Naive thymus-derived CD4-positive, alpha-beta T cell (primary cell): ENCODE measurements at regions of chr15 and their contacts with region 1.

Region 1: GRCh38 chr15:52331490-52332240 is 36.1 kb upstream of the MYO5C start:
- DNase-seq: peak in 8 of 9 donors; percentile 43 to 70 (median 54)
- ATAC-seq: peak; percentile 97
- H3K4me3 ChIP-seq: no peak overlapping the region
- H3K4me3 Mint-ChIP-seq: peak overlapping the region in 8 of 10 donors; percentile 26 to 81 (median 54)
- H3K27ac ChIP-seq: no peak overlapping the region
- H3K27ac Mint-ChIP-seq: peak overlapping the region; percentile 53 to 92 (median 71)
- H3K4me1 ChIP-seq: peaks cover 10 to 11% of the 10 kb centered on the region in 2 donors
- H3K4me1 Mint-ChIP-seq: peaks cover 11 to 23% (median 19%) of the 10 kb centered on the region in 7 donors
- H3K27me3 ChIP-seq: no peaks in the 10 kb centered on the region
- H3K27me3 Mint-ChIP-seq: no peaks in the 10 kb centered on the region

Region 2: DNA sequence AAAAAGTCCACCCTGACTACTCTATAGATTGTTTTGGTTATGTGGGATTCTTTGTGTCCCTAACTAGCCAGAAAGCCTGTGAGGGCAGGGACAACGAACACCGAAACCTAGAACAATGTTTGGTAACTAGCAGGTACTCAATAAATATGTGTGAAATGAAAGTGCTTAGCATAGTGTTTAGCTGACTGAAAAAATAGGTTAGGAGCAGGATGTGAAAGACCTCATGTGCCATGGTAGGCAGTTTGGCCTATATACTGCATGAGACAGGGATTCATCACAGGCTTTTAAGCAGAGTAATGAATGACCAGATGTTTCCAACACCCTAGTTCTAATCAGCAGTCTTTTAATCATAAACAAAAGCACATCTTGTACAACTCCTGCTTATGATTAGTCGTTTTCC is 132.8 kb after region 1 on chr15:
- CTCF ChIA-PET with region 1: interaction called, 3 read pairs
- POLR2A ChIA-PET with region 1: no interaction called
- intact Hi-C with region 1: loop called in 1 of 2 experiments (anchors 1 kb)
- DNase-seq: no peak
- ATAC-seq: peak; percentile 56
- H3K4me3 ChIP-seq: no peak overlapping the region
- H3K4me3 Mint-ChIP-seq: peak overlapping the region in 4 of 10 donors; percentile 3 to 82 (median 33)
- H3K27ac ChIP-seq: no peak overlapping the region
- H3K27ac Mint-ChIP-seq: peak overlapping the region; percentile 21 to 85 (median 66)
- H3K4me1 ChIP-seq: peaks cover 0 to 33% of the 10 kb centered on the region in 2 donors
- H3K4me1 Mint-ChIP-seq: peaks cover 24 to 44% (median 38%) of the 10 kb centered on the region in 7 donors
- H3K27me3 ChIP-seq: no peaks in the 10 kb centered on the region
- H3K27me3 Mint-ChIP-seq: no peaks in the 10 kb centered on the region

Region 3: GRCh38 chr15:52730173-52730572 is 398.5 kb after region 1 on chr15:
- CTCF ChIA-PET with region 1: interaction called, 48 read pairs
- POLR2A ChIA-PET with region 1: interaction called, 5 read pairs
- intact Hi-C with region 1: loop called (anchors 1 kb)
- DNase-seq: peak in 7 of 9 donors; percentile 53 to 82 (median 75)
- ATAC-seq: peak; percentile 96
- H3K4me3 ChIP-seq: no peak overlapping the region
- H3K4me3 Mint-ChIP-seq: peak overlapping the region; percentile 10 to 69 (median 50)
- H3K27ac ChIP-seq: no peak overlapping the region
- H3K27ac Mint-ChIP-seq: peak overlapping the region; percentile 56 to 94 (median 87)
- H3K4me1 ChIP-seq: peaks cover 11 to 15% of the 10 kb centered on the region in 2 donors
- H3K4me1 Mint-ChIP-seq: peaks cover 6 to 31% (median 20%) of the 10 kb centered on the region in 7 donors
- H3K27me3 ChIP-seq: no peaks in the 10 kb centered on the region
- H3K27me3 Mint-ChIP-seq: no peaks in the 10 kb centered on the region

Region 4: GRCh38 chr15:52735231-52736089 is 403.8 kb after region 1 on chr15:
- CTCF ChIA-PET with region 1: interaction called, 48 read pairs
- POLR2A ChIA-PET with region 1: interaction called, 5 read pairs
- intact Hi-C with region 1: loop called (anchors 1 kb)
- DNase-seq: peak; percentile 22 to 83 (median 73)
- ATAC-seq: peak; percentile 90
- H3K4me3 ChIP-seq: no peak overlapping the region
- H3K4me3 Mint-ChIP-seq: no peak overlapping the region
- H3K27ac ChIP-seq: no peak overlapping the region
- H3K27ac Mint-ChIP-seq: peak overlapping the region in 3 of 9 donors; percentile 2 to 75 (median 55)
- H3K4me1 ChIP-seq: peaks cover under 1 to 4% of the 10 kb centered on the region in 2 donors
- H3K4me1 Mint-ChIP-seq: peaks cover 0 to 25% (median 7%) of the 10 kb centered on the region in 7 donors
- H3K27me3 ChIP-seq: no peaks in the 10 kb centered on the region
- H3K27me3 Mint-ChIP-seq: peaks cover 0 to 12% (median 3%) of the 10 kb centered on the region in 5 donors